Left ventricle myocardium superior (tissue), 1 donor: ENCODE measurements at regions of chr7 and their contacts with region 1.

Region 1: GRCh38 chr7:36487756-36488336 is 98.2 kb downstream of the ANLN start:
- DNase-seq: no peak
- ATAC-seq: no peak

Region 2: DNA sequence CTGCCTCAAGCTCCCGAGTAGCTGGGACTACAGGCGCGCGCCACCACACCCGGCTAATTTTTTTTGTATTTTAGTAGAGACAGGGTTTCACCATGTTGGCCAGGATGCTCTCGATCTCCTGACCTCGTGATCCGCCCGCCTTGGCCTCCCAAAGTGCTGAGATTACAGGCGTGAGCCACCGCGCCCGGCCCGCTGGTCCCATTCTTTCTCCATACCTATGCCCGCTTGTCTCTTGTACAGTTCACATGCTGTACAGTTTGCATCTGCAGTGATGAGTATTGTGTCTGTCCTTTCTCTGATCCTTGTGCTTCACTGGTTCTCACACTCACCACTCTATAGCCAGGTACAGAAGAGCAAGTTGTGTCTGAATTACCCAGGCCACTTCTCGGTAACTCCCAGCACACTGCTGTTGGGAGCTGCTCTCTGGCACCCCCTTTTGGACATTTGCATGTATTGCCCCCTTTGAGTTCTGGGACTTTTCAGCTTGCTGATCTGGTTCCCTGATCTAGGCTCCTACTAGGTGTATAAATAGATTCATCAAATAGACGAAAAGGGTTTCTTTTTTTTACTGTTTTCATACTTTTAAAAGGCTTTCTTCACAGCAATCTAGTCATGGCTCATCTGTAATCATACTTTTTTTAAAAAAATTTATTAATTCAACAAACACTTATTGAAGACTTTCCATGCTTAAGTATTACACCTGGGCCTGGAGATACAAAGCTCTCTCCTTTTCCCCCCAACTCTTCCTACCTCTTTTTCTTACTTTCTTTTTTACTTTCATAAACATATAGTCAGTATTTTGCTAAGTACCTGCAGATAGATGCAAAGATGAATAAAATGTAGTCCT is 183.0 kb after region 1 on chr7:
- intact Hi-C with region 1: loop called (anchors 10 kb)
- DNase-seq: no peak
- ATAC-seq: peak; percentile 53